B cell (primary cell): ENCODE measurements at regions of chr9 and their contacts with region 1.

Region 1: GRCh38 chr9:137086531-137087408 is at the start of gene MAN1B1:
- DNase-seq: peak; percentile 100
- ATAC-seq: peak; percentile 79
- H3K4me3 ChIP-seq: peak within 1 kb of the TSS; percentile 42 to 83 (median 74)
- H3K4me3 Mint-ChIP-seq: peak within 1 kb of the TSS; percentile 97
- H3K27ac ChIP-seq: peak within 1 kb of the TSS; percentile 88 to 97
- H3K27ac Mint-ChIP-seq: peak within 1 kb of the TSS; percentile 98
- H3K4me1 ChIP-seq: peaks cover 18 to 41% of the 10 kb centered on the region in 2 donors
- H3K4me1 Mint-ChIP-seq: peaks cover 40% of the 10 kb centered on the region
- H3K27me3 ChIP-seq: no peaks in the 10 kb centered on the region
- H3K27me3 Mint-ChIP-seq: no peaks in the 10 kb centered on the region
- CTCF ChIP-seq: no peak
- total RNA-seq, gene MAN1B1: 68.4 and 80.9 TPM in 2 replicates

Region 2: GRCh38 chr9:137114610-137115391 is 28.0 kb after region 1 on chr9 and contains the start of gene DPP7:
- CTCF ChIA-PET with region 1: interaction called, 4 read pairs
- POLR2A ChIA-PET with region 1: interaction called, 6 read pairs
- intact Hi-C with region 1: loop called (anchors 2 kb)
- DNase-seq: peak; percentile 90
- ATAC-seq: peak; percentile 90
- H3K4me3 ChIP-seq: peak within 1 kb of the TSS; percentile 11 to 79 (median 60)
- H3K4me3 Mint-ChIP-seq: peak within 1 kb of the TSS; percentile 81
- H3K27ac ChIP-seq: peak within 1 kb of the TSS; percentile 55 to 83
- H3K27ac Mint-ChIP-seq: peak within 1 kb of the TSS; percentile 50
- H3K4me1 ChIP-seq: peaks cover 17 to 28% of the 10 kb centered on the region in 2 donors
- H3K4me1 Mint-ChIP-seq: peaks cover 20% of the 10 kb centered on the region
- H3K27me3 ChIP-seq: no peaks in the 10 kb centered on the region
- H3K27me3 Mint-ChIP-seq: no peaks in the 10 kb centered on the region
- CTCF ChIP-seq: no peak
- total RNA-seq, gene DPP7: 324 and 335 TPM in 2 replicates

Region 3: GRCh38 chr9:137150617-137151457 is 64.1 kb after region 1 on chr9:
- CTCF ChIA-PET with region 1: no interaction called
- POLR2A ChIA-PET with region 1: no interaction called
- intact Hi-C with region 1: no loop called
- DNase-seq: peak; percentile 77
- ATAC-seq: peak; percentile 55
- H3K4me3 ChIP-seq: no peak overlapping the region
- H3K4me3 Mint-ChIP-seq: no peak overlapping the region
- H3K27ac ChIP-seq: peak overlapping the region; percentile 11 to 84
- H3K27ac Mint-ChIP-seq: peak overlapping the region; percentile 61
- H3K4me1 ChIP-seq: peaks cover 0 to 13% of the 10 kb centered on the region in 2 donors
- H3K4me1 Mint-ChIP-seq: peaks cover 9% of the 10 kb centered on the region
- H3K27me3 ChIP-seq: peaks cover 0 to 21% (median under 1%) of the 10 kb centered on the region in 4 experiments
- H3K27me3 Mint-ChIP-seq: peaks cover 17% of the 10 kb centered on the region
- CTCF ChIP-seq: no peak